Dendritic cell treated with granulocyte-macrophage colony-stimulating factor and Interleukin-4, amounts not matched to agents 40 ng/mL and 50 ng/mL, for 4 days (primary cell): ENCODE measurements at regions of chr2 and their contacts with region 1.

Region 1: GRCh38 chr2:68925295-68925896 is 27.3 kb downstream of the GKN2 start:
- H3K4me3 Mint-ChIP-seq: no peak overlapping the region
- H3K27ac Mint-ChIP-seq: no peak overlapping the region
- H3K4me1 Mint-ChIP-seq: peaks cover 3% of the 10 kb centered on the region
- H3K27me3 Mint-ChIP-seq: peaks cover 8% of the 10 kb centered on the region

Region 2: DNA sequence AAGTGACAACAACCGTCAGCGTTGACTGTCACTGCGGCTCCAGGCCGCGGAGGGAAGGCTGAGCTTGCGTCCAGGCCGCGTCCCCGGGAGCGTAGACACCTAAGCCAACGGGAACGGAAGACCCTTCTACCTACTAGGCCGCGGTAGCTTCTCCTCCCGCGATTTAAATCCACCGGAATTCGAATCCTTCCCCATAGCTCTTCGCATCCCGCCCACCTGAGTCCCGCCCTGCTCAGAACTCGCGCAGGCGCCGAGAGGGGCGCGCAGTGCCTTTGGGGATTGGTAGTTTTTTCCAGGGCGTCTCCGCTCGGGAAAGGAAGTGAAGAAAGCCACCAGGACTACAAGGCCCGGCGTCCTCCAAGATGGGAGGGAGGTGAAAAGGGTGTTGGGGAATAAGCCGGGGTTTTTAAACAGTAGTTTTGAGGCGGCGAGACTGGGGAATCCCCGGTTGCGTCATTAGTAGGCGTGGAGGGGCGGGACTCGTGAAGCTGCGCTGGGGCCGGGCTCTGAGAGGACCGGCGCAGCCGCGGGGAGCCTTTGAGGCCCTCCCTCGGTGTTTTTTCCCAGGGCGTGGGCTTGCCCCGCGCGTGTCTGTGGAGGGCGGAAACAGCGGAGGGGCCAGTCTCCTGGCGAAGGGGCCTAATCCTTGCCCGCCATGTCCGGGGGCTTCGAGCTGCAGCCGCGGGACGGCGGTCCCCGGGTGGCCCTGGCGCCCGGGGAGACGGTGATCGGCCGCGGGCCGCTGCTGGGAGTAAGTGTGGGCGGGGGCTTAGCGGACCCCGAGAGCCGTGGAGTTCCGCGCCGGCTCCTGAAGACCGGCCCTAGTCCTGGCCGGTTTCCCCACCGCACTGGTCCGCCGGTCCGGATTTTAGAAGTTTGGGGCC is 458.1 kb before region 1 on chr2 and contains the starts of genes APLF and FBXO48:
- intact Hi-C with region 1: loop called (anchors 5 kb)
- H3K4me3 Mint-ChIP-seq: peak within 1 kb of the TSS; percentile 96
- H3K27ac Mint-ChIP-seq: peak within 1 kb of the TSS; percentile 94
- H3K4me1 Mint-ChIP-seq: peaks cover 29% of the 10 kb centered on the region
- H3K27me3 Mint-ChIP-seq: no peaks in the 10 kb centered on the region

Region 3: DNA sequence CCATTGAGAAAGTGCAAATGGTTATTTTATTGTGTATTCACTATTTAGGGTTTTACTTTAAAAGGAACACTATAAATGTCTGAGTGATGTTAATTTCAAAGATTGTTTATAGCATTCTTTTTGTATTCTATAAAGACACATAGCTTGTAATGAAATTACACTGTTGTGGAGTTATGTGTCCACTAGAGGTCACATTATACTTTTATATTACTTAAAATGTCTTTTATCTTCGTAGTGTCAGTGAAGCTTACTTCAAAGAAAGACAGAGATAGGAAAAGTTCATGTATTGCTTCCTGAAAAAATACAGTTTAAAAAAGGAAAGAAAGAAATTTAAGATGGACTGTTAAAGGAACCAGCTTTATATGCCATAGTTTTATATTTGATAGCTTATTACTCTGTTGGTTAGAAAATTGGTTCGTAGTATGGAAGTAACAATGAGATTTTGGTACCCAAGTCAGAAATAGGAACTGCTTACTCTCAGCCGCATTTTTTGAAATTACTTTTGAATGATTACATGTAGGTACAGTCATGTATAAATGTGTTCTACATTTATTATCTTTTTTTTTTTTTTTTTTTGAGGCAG is 437.5 kb before region 1 on chr2:
- intact Hi-C with region 1: loop called (anchors 5 kb)
- H3K4me3 Mint-ChIP-seq: no peak overlapping the region
- H3K27ac Mint-ChIP-seq: no peak overlapping the region
- H3K4me1 Mint-ChIP-seq: peaks cover 10% of the 10 kb centered on the region
- H3K27me3 Mint-ChIP-seq: no peaks in the 10 kb centered on the region

Region 4: DNA sequence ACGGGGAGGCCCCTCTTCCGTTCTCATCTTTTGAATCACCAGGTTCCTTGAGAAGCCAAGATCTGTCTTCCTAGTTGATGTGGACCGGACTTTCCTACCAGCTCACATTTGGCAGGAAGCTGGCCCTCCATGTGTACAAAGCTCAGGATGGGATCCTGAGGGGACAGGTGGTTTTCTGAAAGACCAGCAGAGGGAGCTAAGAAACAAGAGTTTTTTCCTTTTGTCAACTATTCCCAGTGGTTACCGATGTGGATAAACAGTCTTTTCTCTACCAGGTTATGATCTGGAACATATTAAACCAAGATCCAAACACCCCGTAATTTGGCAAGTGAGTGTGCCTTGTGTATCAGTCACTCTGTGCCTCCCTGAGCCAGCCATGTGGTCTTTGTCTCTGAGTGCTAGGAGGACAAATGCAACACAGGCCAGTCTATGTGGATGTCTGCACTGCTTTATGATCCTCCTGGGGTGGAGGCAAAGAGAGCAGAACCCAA is 215.9 kb before region 1 on chr2:
- intact Hi-C with region 1: loop called (anchors 1 kb)
- H3K4me3 Mint-ChIP-seq: no peak overlapping the region
- H3K27ac Mint-ChIP-seq: peak overlapping the region; percentile 61
- H3K4me1 Mint-ChIP-seq: peaks cover 34% of the 10 kb centered on the region
- H3K27me3 Mint-ChIP-seq: no peaks in the 10 kb centered on the region

Region 5: DNA sequence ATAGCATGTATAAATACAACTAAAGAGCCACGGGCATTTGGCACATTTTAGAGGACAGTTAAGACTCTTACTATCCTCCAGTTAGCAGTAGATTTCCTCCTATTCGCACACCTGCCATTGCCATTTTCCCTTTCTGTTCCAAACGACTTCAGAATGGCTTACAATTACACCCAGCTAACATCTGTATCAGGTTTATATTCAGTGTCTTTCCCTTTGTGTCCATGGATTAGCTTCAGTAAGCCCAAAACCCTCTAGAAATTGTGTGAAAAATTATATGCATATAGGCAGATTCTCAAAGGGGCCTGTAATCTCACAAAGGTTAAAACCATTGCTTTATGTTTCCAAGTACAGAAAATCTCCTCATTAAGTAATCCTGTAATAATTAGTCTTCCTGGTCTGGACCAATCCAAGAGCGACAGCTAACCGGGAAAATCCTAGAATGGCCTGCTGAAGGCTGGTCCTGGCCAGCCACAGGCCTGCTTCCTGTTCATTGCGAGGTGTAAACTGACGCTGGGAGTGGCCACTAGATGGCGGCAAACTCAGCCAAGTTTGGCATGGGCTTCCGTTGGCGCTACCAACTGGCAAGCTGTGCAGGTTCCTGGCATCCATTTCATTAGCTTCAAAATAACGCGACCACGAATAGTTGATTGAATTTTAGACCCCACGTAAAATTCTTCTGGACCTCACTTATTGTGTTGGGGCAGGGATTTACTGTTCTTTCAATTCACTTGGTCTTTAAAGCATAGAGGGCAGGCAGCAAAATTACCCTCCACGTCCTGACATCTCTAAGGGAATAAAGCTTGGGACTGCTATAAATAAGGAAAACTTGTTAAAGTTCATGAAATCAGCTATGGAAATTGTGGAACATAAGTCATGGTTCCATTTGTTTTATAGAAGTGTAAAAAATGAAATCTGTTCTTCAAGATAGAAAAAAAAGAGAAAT is 173.7 kb before region 1 on chr2:
- intact Hi-C with region 1: loop called (anchors 5 kb)
- H3K4me3 Mint-ChIP-seq: no peak overlapping the region
- H3K27ac Mint-ChIP-seq: peak overlapping the region; percentile 56
- H3K4me1 Mint-ChIP-seq: peaks cover 85% of the 10 kb centered on the region
- H3K27me3 Mint-ChIP-seq: no peaks in the 10 kb centered on the region

Region 6: GRCh38 chr2:69082430-69082997 is 157.1 kb after region 1 on chr2:
- intact Hi-C with region 1: no loop called
- H3K4me3 Mint-ChIP-seq: peak overlapping the region; percentile 40
- H3K27ac Mint-ChIP-seq: peak overlapping the region; percentile 87
- H3K4me1 Mint-ChIP-seq: peaks cover 69% of the 10 kb centered on the region
- H3K27me3 Mint-ChIP-seq: peaks cover under 1% of the 10 kb centered on the region